ENCODE measurements at regions of chr3 and their contacts with region 1.

Region 1: GRCh38 chr3:140528940-140529495 is 148.8 kb upstream of the TRIM42 start:
- DNase-seq: no peak
- ATAC-seq: no peak
- H3K4me3 ChIP-seq: no peak overlapping the region
- H3K27ac ChIP-seq: no peak overlapping the region
- H3K4me1 ChIP-seq: no peaks in the 10 kb centered on the region
- H3K27me3 ChIP-seq: no peaks in the 10 kb centered on the region
- CTCF ChIP-seq: no peak
- EP300 ChIP-seq: no peak
- POLR2A ChIP-seq: no peak
- RAD21 ChIP-seq: no peak

Region 2: GRCh38 chr3:139655909-139656595 is 873.0 kb before region 1 on chr3:
- CTCF ChIA-PET with region 1: no interaction called
- POLR2A ChIA-PET with region 1: no interaction called
- in situ Hi-C with region 1: no loop called
- intact Hi-C with region 1: loop called (anchors 5 kb)
- DNase-seq: peak; percentile 6
- ATAC-seq: no peak
- H3K4me3 ChIP-seq: no peak overlapping the region
- H3K27ac ChIP-seq: no peak overlapping the region
- H3K4me1 ChIP-seq: peaks cover 40% of the 10 kb centered on the region
- H3K27me3 ChIP-seq: no peaks in the 10 kb centered on the region
- CTCF ChIP-seq: no peak
- EP300 ChIP-seq: no peak
- POLR2A ChIP-seq: no peak
- RAD21 ChIP-seq: no peak

Measured in HepG2 (cell line).